Right lobe of liver (tissue), 6 donors: ENCODE measurements at regions of chr11 and their contacts with region 1.

Region 1: DNA sequence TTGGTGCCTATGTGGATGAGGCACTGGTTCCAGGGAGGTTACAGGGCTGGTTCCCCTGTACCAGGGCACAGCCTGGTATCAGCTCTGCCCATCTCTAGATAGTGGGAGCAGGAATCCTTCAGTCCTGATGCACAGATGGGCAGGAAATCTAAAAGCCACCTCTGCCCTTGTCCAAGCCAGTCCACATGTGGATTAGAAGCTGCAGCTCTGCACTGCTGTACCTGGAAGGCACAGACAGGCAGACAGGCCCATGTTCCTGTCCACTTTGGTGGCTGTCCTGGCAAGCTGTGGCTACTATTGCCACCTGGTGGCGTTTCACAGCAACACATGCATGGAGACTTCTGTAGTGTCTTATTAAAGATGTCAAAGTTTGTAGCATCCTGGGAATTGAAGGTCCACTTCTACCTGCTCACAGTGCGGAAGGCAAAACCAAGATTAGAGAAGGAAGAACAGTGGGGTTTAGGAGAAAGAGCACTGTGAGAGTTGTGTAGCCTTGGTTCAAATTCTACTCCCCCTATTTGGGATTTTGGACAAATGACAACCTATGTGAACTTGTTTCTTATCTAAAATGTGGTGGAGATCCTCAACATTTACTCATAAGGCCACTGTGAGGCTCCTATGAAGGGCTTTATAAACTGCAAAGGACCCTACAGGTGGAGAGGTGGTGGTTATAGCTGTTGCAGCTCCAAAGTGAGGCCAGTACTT is 30.1 kb downstream of the NAV2 start:
- DNase-seq: peak; percentile 75 to 85 (median 84)
- ATAC-seq: peak; percentile 98
- H3K4me3 ChIP-seq: no peak overlapping the region
- H3K27ac ChIP-seq: no peak overlapping the region
- H3K4me1 ChIP-seq: peaks cover 0 to 4% (median 0%) of the 10 kb centered on the region in 4 donors
- H3K27me3 ChIP-seq: no peaks in the 10 kb centered on the region
- CTCF ChIP-seq: peak; percentile 91 to 98 (median 94)
- POLR2A ChIP-seq: no peak

Region 2: GRCh38 chr11:19311308-19312030 is 431.3 kb before region 1 on chr11:
- intact Hi-C with region 1: loop called in 1 of 2 experiments (anchors 10 kb)
- DNase-seq: peak; percentile 53 to 75 (median 61)
- ATAC-seq: peak; percentile 93 to 97 (median 95)
- H3K4me3 ChIP-seq: no peak overlapping the region
- H3K27ac ChIP-seq: no peak overlapping the region
- H3K4me1 ChIP-seq: no peaks in the 10 kb centered on the region
- H3K27me3 ChIP-seq: no peaks in the 10 kb centered on the region
- CTCF ChIP-seq: peak; percentile 80 to 90 (median 86)
- POLR2A ChIP-seq: no peak

Region 3: DNA sequence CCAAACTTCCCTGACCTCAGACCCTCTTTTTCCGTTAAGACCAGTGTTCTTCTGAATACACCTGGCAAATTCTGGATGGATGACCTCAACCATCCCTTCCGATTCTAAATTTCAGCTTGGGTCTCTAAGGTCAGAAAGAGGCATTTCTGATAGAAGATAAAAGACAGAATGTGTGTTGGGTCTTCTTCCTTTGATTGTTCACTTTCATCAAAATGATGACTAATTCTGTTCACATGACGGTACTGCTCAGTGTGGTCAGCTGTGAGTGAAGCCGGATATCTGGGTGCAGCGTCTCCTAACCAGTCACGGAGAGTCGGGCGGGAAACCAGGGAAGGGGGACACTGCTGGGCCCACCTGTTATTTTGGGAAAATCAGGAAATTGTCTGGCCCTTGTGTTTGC is 181.7 kb before region 1 on chr11:
- intact Hi-C with region 1: loop called (anchors 2 to 5 kb)
- DNase-seq: no peak
- ATAC-seq: peak in 2 of 4 donors; percentile 25 to 29
- H3K4me3 ChIP-seq: no peak overlapping the region
- H3K27ac ChIP-seq: no peak overlapping the region
- H3K4me1 ChIP-seq: peaks cover 0 to 28% (median 13%) of the 10 kb centered on the region in 4 donors
- H3K27me3 ChIP-seq: no peaks in the 10 kb centered on the region
- CTCF ChIP-seq: no peak
- POLR2A ChIP-seq: no peak

Region 4: DNA sequence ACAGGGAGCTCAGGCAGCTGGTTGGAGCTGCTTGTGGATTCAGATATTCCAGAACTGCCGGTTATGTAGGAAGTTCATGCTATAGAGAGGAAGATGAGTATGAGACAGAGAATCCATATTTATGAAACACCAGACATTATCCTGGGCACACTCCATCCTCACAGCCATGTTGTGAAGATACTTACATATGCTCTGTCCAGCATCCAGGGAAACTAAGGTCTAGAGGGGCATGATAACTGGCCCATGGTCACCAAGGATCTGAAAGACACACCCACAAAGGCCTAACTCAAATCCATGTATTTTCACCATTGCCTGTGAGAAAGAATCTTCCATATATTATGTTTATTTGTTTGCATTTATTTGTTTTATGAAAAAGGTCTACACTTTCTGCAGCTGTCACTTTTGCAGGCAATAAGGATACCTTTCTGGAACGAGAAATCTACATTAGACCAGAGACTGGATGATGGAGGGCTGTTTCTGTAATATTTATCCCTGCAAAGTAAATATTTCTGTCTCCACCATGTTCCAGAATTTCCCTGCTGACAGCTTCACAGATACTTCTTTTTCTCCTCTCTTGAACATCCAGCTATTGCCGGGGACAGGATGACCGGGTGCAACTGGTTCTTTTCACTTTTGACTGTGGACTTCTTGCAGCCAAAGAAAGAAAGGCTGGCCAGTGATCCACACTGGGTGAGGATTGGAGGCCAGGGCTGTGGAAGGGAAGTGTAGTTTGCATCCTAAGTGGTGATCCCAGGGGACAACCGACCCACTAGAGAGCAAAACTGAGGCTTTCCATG is 176.0 kb before region 1 on chr11:
- intact Hi-C with region 1: loop called (anchors 2 to 5 kb)
- DNase-seq: no peak
- ATAC-seq: no peak
- H3K4me3 ChIP-seq: no peak overlapping the region
- H3K27ac ChIP-seq: no peak overlapping the region
- H3K4me1 ChIP-seq: peaks cover 0 to 5% (median 2%) of the 10 kb centered on the region in 4 donors
- H3K27me3 ChIP-seq: no peaks in the 10 kb centered on the region
- CTCF ChIP-seq: no peak
- POLR2A ChIP-seq: no peak